MCF 10A (cell line): ENCODE measurements at regions of chr4 and their contacts with region 1.

Region 1: DNA sequence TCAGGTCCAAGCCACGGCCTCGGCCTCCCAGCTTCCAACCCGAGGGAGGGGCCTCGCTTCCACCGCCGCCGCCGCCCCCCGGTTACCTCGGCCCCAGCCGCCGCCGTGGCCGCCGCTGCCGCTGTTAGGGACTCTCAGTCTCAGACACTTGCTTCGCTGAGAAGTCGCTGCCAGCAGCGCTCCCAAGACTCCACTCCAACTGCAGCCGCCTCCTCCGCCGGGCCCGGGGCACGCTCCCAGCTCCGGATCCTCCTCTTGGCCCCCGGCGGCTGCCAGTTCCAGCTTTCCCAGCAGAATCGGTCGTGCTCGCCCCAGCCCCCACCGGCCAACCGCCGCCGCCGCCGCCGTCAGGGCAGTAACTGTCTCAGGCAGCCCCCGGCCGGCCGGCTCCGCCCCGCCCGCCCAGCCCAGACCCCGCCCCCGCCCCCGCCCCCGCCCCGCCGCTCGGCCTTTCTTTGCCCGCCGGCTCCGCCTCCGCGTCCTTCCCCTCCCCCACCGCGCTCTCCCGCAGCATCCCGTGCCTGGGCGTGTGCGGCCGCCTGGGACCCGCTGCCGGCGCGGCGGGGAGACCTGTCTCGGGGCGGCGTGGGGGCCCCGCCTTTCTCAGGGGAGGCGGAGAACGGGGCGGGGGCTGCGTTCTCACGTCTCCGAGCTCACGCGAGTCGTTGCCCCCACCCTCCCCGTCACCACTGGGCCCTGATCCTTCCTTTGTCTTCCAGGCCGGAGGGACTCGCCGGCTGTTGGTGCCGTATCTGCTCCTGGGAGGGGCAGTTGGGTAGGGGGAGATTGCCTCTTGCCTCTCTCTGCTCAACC is at the start of gene ANKRD50:
- DNase-seq: peak; percentile 93
- H3K4me3 Mint-ChIP-seq: no peak within 1 kb of the TSS
- H3K27ac Mint-ChIP-seq: no peak within 1 kb of the TSS
- H3K4me1 Mint-ChIP-seq: peaks cover 18% of the 10 kb centered on the region
- H3K27me3 Mint-ChIP-seq: no peaks in the 10 kb centered on the region
- CTCF ChIP-seq: no peak
- total RNA-seq, gene ANKRD50: 44.1 and 47.6 TPM in 2 replicates

Region 2: DNA sequence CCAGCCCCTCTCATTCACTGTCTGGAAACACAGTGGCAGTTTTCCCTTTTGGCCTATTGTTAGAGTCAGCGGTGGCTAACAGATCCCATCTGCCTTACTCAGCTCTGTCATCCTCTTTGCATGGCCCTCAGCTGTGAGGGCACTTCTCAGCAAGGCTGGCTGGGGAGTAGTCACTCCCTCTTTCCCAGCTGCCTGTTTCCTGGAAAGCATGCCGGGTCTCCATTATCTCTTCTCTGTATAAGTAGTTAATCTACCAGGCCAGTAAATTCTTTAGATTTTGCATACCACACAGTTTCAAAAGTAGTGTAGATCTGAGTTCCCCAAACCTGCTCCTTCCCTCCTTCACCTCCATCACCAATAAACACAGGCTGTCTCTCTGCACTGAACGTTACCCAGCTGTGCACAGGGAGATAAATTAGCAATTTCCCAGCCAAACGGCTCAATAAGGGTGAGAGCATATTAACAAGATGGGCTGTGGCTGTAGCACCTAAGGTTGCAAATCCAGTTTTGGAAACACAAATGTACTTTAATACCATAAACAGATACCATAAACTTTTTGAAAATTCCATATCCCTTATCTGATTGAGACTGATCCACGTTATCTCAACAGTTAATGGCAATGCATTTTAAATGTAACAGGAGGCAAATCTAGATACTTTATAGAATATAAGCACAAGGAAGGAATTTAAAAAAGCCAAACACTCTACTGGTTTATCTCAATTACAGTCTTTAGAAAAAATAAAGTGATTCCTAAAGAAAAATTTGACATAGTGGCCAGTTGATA is 229.3 kb before region 1 on chr4:
- CTCF ChIA-PET with region 1: no interaction called
- POLR2A ChIA-PET with region 1: no interaction called
- intact Hi-C with region 1: loop called (anchors 5 kb)
- DNase-seq: no peak
- H3K4me3 Mint-ChIP-seq: no peak overlapping the region
- H3K27ac Mint-ChIP-seq: no peak overlapping the region
- H3K4me1 Mint-ChIP-seq: no peaks in the 10 kb centered on the region
- H3K27me3 Mint-ChIP-seq: no peaks in the 10 kb centered on the region
- CTCF ChIP-seq: no peak

Region 3: DNA sequence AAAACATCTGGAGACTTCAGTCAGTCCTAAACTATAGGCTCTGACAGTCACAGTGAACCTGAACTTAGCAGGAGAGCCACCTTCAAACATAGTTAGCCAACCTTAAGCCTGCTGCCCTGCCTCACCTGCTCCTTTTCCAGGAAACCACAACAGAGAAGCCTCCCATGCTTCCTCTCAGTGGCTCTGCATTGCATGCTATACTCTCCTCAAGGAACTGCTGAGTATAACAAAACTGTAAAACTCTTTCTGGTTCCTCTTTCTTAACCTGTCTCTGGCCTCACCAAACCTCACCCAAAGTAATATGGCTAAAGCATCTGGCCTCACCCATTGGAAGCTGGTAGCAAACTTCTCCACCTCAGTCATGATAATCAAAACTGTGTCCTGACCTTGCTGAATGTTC is 122.1 kb before region 1 on chr4:
- CTCF ChIA-PET with region 1: no interaction called
- POLR2A ChIA-PET with region 1: no interaction called
- intact Hi-C with region 1: no loop called
- DNase-seq: no peak
- H3K4me3 Mint-ChIP-seq: no peak overlapping the region
- H3K27ac Mint-ChIP-seq: no peak overlapping the region
- H3K4me1 Mint-ChIP-seq: no peaks in the 10 kb centered on the region
- H3K27me3 Mint-ChIP-seq: no peaks in the 10 kb centered on the region
- CTCF ChIP-seq: no peak

Region 4: DNA sequence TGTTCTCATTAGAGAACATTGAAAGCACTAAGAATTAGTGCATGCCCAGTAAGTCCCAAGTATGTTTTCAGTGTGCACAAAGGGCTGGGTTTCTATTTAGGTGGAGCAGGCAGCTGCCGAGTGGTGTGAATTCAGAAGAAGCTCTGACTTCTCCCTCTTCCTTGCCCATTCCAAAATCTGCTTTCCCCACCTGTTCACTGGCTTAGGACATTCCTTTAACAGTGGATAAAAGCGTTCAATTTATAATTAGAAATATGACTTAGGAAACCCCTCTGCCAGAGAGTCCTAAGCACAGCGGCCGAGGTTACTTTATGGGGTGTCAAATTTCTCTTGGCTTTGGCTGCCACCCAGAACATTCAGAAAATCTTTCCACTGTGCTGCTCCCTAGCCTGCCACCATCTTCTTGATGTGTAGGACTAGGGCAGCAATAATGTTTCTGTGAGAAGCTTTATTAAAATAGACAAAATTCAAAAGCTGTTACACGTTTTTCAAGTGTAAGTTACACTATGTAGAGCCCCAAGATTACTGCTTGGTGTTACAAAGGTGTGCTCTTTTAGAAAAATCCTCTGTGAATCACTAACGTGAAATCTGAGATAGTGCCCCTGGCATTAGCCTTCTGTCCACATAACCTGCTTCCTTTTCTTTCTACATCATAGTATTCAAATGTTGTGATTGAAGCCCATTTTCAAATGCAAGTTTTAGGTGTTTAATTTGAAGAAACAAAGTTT is 191.6 kb after region 1 on chr4:
- CTCF ChIA-PET with region 1: no interaction called
- POLR2A ChIA-PET with region 1: interaction called, 11 read pairs
- intact Hi-C with region 1: loop called (anchors 5 kb)
- DNase-seq: peak; percentile 84
- H3K4me3 Mint-ChIP-seq: peak overlapping the region; percentile 62
- H3K27ac Mint-ChIP-seq: peak overlapping the region; percentile 92
- H3K4me1 Mint-ChIP-seq: peaks cover 18% of the 10 kb centered on the region
- H3K27me3 Mint-ChIP-seq: no peaks in the 10 kb centered on the region
- CTCF ChIP-seq: no peak

Region 5: GRCh38 chr4:124958847-124959246 is 246.3 kb after region 1 on chr4:
- CTCF ChIA-PET with region 1: no interaction called
- POLR2A ChIA-PET with region 1: no interaction called
- intact Hi-C with region 1: no loop called
- DNase-seq: no peak
- H3K4me3 Mint-ChIP-seq: no peak overlapping the region
- H3K27ac Mint-ChIP-seq: no peak overlapping the region
- H3K4me1 Mint-ChIP-seq: peaks cover 2% of the 10 kb centered on the region
- H3K27me3 Mint-ChIP-seq: no peaks in the 10 kb centered on the region
- CTCF ChIP-seq: no peak

Region 6: DNA sequence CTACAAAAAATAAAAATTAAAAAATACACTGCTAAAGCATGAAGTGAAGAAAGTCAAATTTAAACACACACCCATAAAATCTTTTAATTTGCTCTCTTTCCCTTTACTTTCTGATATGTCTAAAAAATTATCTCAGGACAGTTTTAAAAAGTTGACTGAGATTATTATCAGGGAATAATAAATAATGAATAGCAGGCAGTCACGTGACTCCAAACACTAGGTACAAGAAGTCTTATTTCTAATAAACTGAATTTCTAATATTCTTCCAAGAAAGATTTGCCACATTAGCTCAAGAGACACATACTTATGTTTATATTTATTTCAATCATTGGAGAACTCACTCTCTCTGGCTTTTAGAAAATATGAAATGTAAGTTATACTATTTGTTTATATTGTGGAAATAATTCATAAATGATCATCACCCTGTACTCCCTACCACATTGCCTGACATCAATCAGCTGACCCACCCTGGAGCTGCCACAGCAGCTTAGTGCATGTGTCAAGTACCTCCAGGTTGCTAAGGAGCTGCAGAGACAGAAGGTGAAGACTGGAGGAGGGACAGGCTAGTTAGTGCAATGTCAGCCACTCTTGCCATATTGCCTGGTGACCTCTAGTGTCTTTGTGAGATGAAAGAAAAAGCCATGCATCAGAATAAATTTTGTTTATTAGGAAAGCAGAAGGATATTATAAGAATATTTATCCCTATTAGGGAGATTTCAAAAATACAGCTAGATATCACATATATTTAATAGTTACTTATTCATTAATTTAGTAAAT is 358.1 kb after region 1 on chr4:
- CTCF ChIA-PET with region 1: no interaction called
- POLR2A ChIA-PET with region 1: no interaction called
- intact Hi-C with region 1: loop called (anchors 5 kb)
- DNase-seq: peak; percentile 10
- H3K4me3 Mint-ChIP-seq: no peak overlapping the region
- H3K27ac Mint-ChIP-seq: no peak overlapping the region
- H3K4me1 Mint-ChIP-seq: peaks cover under 1% of the 10 kb centered on the region
- H3K27me3 Mint-ChIP-seq: no peaks in the 10 kb centered on the region
- CTCF ChIP-seq: no peak

Region 7: DNA sequence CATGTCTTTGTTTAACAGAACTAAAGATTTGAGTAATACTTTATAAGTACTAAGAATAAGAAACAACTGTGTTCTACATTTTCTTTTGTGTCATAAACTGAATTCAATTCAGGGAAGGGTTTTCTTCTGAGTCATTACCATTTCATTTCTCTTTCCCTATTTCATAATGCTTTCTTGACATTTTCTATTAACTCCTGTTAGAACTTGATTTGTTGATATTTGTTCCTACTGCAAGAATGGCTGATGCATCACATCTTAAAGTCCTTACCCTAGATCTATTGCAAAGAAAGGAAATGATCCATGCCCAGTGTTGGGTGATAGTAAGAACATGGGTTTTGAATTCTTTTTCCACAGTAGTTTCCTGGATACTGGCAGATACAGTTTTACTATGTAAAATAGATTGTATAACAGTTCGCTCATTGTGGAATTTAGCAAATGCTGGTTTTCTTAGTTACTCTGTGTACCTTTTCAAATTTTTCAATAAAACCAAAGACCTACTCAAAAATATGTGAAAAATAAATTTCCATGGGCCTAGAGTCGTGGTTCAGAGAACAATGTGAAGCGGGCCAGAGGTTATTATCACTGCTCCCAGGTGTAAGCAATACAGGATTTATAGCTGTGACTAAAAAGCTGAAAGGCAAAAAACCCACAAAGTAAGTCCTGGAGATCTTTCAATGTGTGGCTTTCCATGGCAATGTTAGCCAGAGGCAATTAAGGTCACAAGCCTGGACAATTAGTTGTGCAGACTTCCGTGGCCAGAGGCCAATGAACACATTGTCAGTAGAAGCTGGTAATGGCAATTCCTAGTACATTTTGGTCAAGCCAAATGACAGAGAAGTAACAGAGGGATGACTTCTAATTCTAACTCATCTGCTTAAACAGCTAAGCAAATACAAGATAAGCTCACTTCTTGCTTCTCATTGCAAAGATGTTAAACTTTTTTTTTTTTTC is 474.9 kb after region 1 on chr4:
- CTCF ChIA-PET with region 1: no interaction called
- POLR2A ChIA-PET with region 1: no interaction called
- intact Hi-C with region 1: loop called (anchors 5 kb)
- DNase-seq: peak; percentile 69
- H3K4me3 Mint-ChIP-seq: peak overlapping the region; percentile 14
- H3K27ac Mint-ChIP-seq: peak overlapping the region; percentile 85
- H3K4me1 Mint-ChIP-seq: peaks cover 28% of the 10 kb centered on the region
- H3K27me3 Mint-ChIP-seq: no peaks in the 10 kb centered on the region
- CTCF ChIP-seq: no peak